Right cardiac atrium (tissue), 5 donors: ENCODE measurements at regions of chr6 and their contacts with region 1.

Region 1: GRCh38 chr6:3244003-3244831 is 14.5 kb upstream of the PSMG4 start:
- DNase-seq: no peak
- ATAC-seq: no peak
- H3K4me3 ChIP-seq: no peak overlapping the region
- H3K27ac ChIP-seq: no peak overlapping the region
- H3K4me1 ChIP-seq: no peaks in the 10 kb centered on the region
- H3K27me3 ChIP-seq: no peaks in the 10 kb centered on the region

Region 2: GRCh38 chr6:3139090-3139903 is 104.9 kb before region 1 on chr6:
- intact Hi-C with region 1: loop called in 2 of 4 experiments (anchors 5 kb)
- DNase-seq: peak; percentile 50 to 81 (median 75)
- ATAC-seq: peak; percentile 81 to 90
- H3K4me3 ChIP-seq: no peak overlapping the region
- H3K27ac ChIP-seq: peak overlapping the region; percentile 51
- H3K4me1 ChIP-seq: no peaks in the 10 kb centered on the region
- H3K27me3 ChIP-seq: no peaks in the 10 kb centered on the region

Region 3: GRCh38 chr6:3382326-3383279 is 138.4 kb after region 1 on chr6:
- intact Hi-C with region 1: no loop called
- DNase-seq: no peak
- ATAC-seq: no peak
- H3K4me3 ChIP-seq: no peak overlapping the region
- H3K27ac ChIP-seq: no peak overlapping the region
- H3K4me1 ChIP-seq: no peaks in the 10 kb centered on the region
- H3K27me3 ChIP-seq: no peaks in the 10 kb centered on the region